ENCODE measurements at regions of chr18 and their contacts with region 1.

Region 1: GRCh38 chr18:56716692-56717146 is 65.6 kb downstream of the WDR7 start:
- DNase-seq: no peak
- H3K4me3 Mint-ChIP-seq: no peak overlapping the region
- H3K27ac Mint-ChIP-seq: peak overlapping the region; percentile 66
- H3K4me1 Mint-ChIP-seq: peaks cover 35% of the 10 kb centered on the region
- H3K27me3 Mint-ChIP-seq: no peaks in the 10 kb centered on the region

Region 2: DNA sequence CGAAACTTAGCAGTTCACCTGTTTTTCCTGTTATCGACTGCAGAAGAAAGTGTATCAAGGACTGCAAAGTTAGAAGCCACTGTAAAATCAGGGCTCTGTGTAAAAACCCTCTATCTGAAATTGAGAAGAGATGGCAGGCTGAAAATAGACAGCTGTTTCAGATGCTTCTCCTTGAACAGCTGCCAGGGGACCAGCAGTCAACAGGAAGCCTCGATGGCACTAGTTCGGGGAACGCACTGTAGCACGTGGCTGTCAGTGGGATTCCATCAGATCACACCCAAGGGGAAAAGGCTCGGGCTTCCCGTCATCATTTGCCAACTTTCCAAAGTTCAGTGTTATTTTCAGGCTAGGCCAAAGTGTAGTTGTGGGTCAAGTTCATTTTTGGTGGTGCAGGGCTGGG is 395.2 kb before region 1 on chr18:
- intact Hi-C with region 1: no loop called
- DNase-seq: no peak
- H3K4me3 Mint-ChIP-seq: no peak overlapping the region
- H3K27ac Mint-ChIP-seq: no peak overlapping the region
- H3K4me1 Mint-ChIP-seq: no peaks in the 10 kb centered on the region
- H3K27me3 Mint-ChIP-seq: no peaks in the 10 kb centered on the region

Region 3: DNA sequence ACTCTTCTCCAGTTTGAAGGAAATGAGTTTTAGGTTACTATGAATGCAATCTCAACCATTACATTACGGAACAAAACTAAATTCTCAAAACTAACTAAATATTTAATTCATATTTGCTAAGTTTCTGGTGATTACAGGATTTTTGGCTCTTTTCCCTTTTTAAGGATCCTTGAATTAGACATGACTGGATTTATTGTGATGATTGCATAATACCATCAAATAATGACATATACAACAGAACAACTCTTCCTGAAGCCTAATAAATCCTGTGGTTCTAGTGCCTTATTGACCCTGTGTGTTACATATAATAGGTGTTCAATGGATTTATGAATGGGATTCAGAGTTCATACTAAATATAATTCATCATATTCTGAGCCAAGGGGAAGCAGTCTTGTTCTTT is 25.0 kb after region 1 on chr18:
- intact Hi-C with region 1: loop called (anchors 1 kb)
- DNase-seq: no peak
- H3K4me3 Mint-ChIP-seq: no peak overlapping the region
- H3K27ac Mint-ChIP-seq: no peak overlapping the region
- H3K4me1 Mint-ChIP-seq: peaks cover 10% of the 10 kb centered on the region
- H3K27me3 Mint-ChIP-seq: no peaks in the 10 kb centered on the region